AG04450 (cell line): ENCODE measurements at regions of chr16 and their contacts with region 1.

Region 1: GRCh38 chr16:67226804-67227557 is at the start of gene TMEM208:
- DNase-seq: peak; percentile 94
- H3K4me3 ChIP-seq: peak within 1 kb of the TSS; percentile 99
- H3K27ac ChIP-seq: peak within 1 kb of the TSS; percentile 75
- H3K27me3 ChIP-seq: no peaks in the 10 kb centered on the region
- CTCF ChIP-seq: peak; percentile 13; the same call in 1 of the 2 replicates
- polyA plus RNA-seq, gene TMEM208: 38.5 and 46.8 TPM in 2 replicates

Region 2: DNA sequence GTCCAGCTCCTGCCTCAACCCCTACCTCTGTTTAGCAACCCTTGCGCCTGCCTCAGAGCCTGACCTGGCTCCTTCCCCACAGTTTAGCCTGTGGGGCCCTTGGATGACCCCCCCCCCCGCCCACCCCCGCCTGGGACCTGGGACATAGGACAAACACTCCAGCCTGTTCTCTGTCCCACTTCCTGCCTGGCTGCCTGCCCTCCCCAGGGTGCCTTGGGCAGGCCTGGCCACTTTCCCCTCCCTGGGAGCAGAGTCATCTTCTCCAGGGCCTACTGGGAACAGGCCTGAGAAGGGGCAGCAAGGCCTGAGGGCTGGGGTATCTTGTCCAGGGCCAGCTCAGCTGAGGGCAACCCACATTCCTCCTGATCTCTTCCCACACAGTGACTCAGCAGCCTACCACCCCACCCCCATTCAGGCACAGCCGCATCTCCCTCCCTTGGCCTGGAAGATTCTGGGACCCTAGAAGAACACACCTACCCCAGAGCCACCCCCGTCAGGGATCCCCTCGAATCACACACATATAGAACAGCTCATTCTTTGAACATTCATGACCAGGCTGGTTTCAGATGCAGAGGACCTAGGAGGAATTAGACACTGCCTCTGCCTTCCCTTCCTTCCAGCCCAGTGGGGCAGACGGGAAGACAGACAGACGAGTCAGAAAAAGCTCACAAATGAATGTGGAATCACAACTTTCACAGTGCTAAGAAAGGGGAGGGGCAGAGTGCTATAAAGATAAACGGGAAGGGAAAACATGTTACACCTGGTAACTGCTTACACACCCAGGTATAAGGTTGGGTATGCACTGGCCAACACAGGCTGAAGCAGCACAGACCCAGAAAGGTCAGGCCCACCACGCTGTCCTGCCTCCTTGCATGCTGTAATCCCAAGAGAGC is 14.3 kb after region 1 on chr16:
- CTCF ChIA-PET with region 1: no interaction called
- POLR2A ChIA-PET with region 1: interaction called, 10 read pairs
- DNase-seq: peak; percentile 67
- H3K4me3 ChIP-seq: no peak overlapping the region
- H3K27ac ChIP-seq: peak overlapping the region; percentile 98
- H3K27me3 ChIP-seq: no peaks in the 10 kb centered on the region
- CTCF ChIP-seq: no peak

Region 3: DNA sequence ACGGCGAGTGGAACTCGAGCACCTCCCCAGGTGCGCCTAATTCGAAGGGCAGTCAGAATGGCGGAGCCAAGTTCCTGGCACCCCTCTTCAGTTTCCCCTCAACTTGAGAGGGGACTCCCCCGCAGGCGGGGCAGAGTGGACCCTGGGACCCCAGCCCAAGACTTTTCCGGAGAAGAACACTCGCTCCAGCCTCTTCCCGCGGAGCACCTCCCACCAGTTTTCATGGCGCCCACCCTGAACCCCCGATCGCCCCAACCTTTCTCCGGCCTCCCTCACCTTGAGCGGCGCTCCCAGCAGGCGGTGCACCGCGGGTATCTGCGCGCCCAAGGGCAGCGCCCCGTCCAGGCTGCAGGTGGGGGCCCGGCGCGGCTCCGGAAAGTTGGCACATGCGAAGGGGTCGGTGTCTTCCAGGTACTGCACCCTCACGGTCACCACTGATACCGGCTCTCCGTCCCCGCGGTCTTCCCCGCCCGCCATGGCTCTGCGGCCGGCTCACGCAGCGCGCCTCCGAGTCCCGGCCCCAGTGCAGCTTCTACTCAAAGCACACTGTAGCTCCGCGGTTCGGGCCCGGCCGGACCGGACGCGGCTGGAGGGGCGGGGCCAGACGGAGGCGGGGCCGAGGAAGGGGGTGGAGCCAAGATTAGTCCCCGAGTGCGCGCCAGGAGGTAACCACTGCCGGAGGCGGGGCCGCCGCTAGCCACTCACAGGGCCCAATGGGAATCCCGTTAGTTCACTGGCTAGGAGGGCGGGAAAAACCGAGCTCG is 20.1 kb after region 1 on chr16 and contains the start of gene FHOD1:
- CTCF ChIA-PET with region 1: no interaction called
- POLR2A ChIA-PET with region 1: interaction called, 12 read pairs
- DNase-seq: peak; percentile 79
- H3K4me3 ChIP-seq: peak within 1 kb of the TSS; percentile 86
- H3K27ac ChIP-seq: peak within 1 kb of the TSS; percentile 90
- H3K27me3 ChIP-seq: no peaks in the 10 kb centered on the region
- CTCF ChIP-seq: no peak
- polyA plus RNA-seq, gene FHOD1: 21.2 and 25.4 TPM in 2 replicates